CD8-positive, alpha-beta T cell (primary cell): ENCODE measurements at regions of chr4 and their contacts with region 1.

Region 1: GRCh38 chr4:168318266-168318895 is at the start of gene DDX60:
- DNase-seq: peak; percentile 65 to 96 (median 85)
- ATAC-seq: peak; percentile 94
- H3K4me3 ChIP-seq: peak within 1 kb of the TSS; percentile 95 to 100
- H3K4me3 Mint-ChIP-seq: peak within 1 kb of the TSS; percentile 98
- H3K27ac ChIP-seq: peak within 1 kb of the TSS; percentile 99
- H3K27ac Mint-ChIP-seq: peak within 1 kb of the TSS; percentile 99
- H3K4me1 ChIP-seq: peaks cover 24% of the 10 kb centered on the region
- H3K4me1 Mint-ChIP-seq: peaks cover 43% of the 10 kb centered on the region
- H3K27me3 ChIP-seq: no peaks in the 10 kb centered on the region
- H3K27me3 Mint-ChIP-seq: no peaks in the 10 kb centered on the region
- CTCF ChIP-seq: no peak
- total RNA-seq, gene DDX60: 8.2 to 10.1 TPM

Region 2: GRCh38 chr4:168269896-168270295 is 48.5 kb before region 1 on chr4:
- CTCF ChIA-PET with region 1: no interaction called
- POLR2A ChIA-PET with region 1: no interaction called
- intact Hi-C with region 1: loop called in 1 of 2 experiments (anchors 5 kb)
- DNase-seq: no peak
- ATAC-seq: no peak
- H3K4me3 ChIP-seq: no peak overlapping the region
- H3K4me3 Mint-ChIP-seq: no peak overlapping the region
- H3K27ac ChIP-seq: no peak overlapping the region
- H3K27ac Mint-ChIP-seq: no peak overlapping the region
- H3K4me1 ChIP-seq: peaks cover 7% of the 10 kb centered on the region
- H3K4me1 Mint-ChIP-seq: peaks cover 6% of the 10 kb centered on the region
- H3K27me3 ChIP-seq: no peaks in the 10 kb centered on the region
- H3K27me3 Mint-ChIP-seq: no peaks in the 10 kb centered on the region
- CTCF ChIP-seq: no peak

Region 3: DNA sequence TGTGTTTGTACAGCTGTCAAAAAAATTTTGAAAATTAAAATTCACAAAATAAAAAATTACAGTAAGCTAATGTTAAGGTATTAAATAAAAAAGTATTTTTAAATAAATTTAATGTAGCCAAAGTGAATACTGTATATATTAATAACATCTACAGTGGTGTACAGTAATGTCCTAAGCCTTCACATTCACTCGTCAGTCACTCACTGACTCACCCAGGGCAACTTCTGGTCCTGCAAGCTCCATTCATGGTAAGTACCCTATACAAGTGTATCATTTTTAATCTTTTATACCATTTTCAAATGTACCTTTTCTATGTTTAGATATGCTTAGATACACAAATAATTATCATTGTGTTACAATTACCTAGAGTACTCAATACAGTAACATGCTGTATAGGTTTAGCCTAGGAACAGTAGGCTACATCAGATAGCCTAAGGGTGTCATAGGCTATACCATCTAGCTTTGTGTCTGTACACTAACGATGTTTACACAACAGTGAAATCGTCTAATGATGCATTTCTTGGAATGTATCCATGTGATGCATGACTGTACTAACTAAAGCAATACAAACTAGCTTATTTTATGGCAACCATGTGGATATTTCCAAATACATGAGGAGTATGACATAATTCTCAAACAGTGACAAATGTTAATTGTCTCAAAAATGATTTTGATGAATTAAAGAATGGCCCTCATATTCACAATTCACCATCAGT is 13.5 kb before region 1 on chr4:
- CTCF ChIA-PET with region 1: no interaction called
- POLR2A ChIA-PET with region 1: interaction called, 12 read pairs
- intact Hi-C with region 1: no loop called
- DNase-seq: no peak
- ATAC-seq: no peak
- H3K4me3 ChIP-seq: no peak overlapping the region
- H3K4me3 Mint-ChIP-seq: no peak overlapping the region
- H3K27ac ChIP-seq: no peak overlapping the region
- H3K27ac Mint-ChIP-seq: no peak overlapping the region
- H3K4me1 ChIP-seq: peaks cover 3% of the 10 kb centered on the region
- H3K4me1 Mint-ChIP-seq: peaks cover 20% of the 10 kb centered on the region
- H3K27me3 ChIP-seq: no peaks in the 10 kb centered on the region
- H3K27me3 Mint-ChIP-seq: no peaks in the 10 kb centered on the region
- CTCF ChIP-seq: no peak

Region 4: GRCh38 chr4:168480931-168481611 is 162.7 kb after region 1 on chr4:
- CTCF ChIA-PET with region 1: interaction called, 5 read pairs
- POLR2A ChIA-PET with region 1: interaction called, 16 read pairs
- intact Hi-C with region 1: loop called (anchors 1 to 2 kb)
- DNase-seq: peak in 8 of 9 experiments; percentile 16 to 89 (median 56)
- ATAC-seq: peak; percentile 67
- H3K4me3 ChIP-seq: peak overlapping the region; percentile 56 to 93
- H3K4me3 Mint-ChIP-seq: peak overlapping the region; percentile 99
- H3K27ac ChIP-seq: peak overlapping the region; percentile 82 to 96
- H3K27ac Mint-ChIP-seq: peak overlapping the region; percentile 97
- H3K4me1 ChIP-seq: peaks cover 42% of the 10 kb centered on the region
- H3K4me1 Mint-ChIP-seq: peaks cover 66% of the 10 kb centered on the region
- H3K27me3 ChIP-seq: no peaks in the 10 kb centered on the region
- H3K27me3 Mint-ChIP-seq: no peaks in the 10 kb centered on the region
- CTCF ChIP-seq: no peak

Region 5: GRCh38 chr4:168631241-168632162 is 313.1 kb after region 1 on chr4:
- CTCF ChIA-PET with region 1: no interaction called
- POLR2A ChIA-PET with region 1: no interaction called
- intact Hi-C with region 1: no loop called
- DNase-seq: no peak
- ATAC-seq: no peak
- H3K4me3 ChIP-seq: no peak overlapping the region
- H3K4me3 Mint-ChIP-seq: peak overlapping the region; percentile 26
- H3K27ac ChIP-seq: no peak overlapping the region
- H3K27ac Mint-ChIP-seq: no peak overlapping the region
- H3K4me1 ChIP-seq: no peaks in the 10 kb centered on the region
- H3K4me1 Mint-ChIP-seq: peaks cover 12% of the 10 kb centered on the region
- H3K27me3 ChIP-seq: peaks cover 5 to 6% of the 10 kb centered on the region in 2 experiments
- H3K27me3 Mint-ChIP-seq: peaks cover 55% of the 10 kb centered on the region
- CTCF ChIP-seq: no peak

Region 6: GRCh38 chr4:169757575-169758184 is 1439.3 kb after region 1 on chr4 and contains the start of gene HPF1:
- CTCF ChIA-PET with region 1: no interaction called
- POLR2A ChIA-PET with region 1: no interaction called
- intact Hi-C with region 1: loop called (anchors 1 to 5 kb)
- DNase-seq: peak; percentile 82 to 97 (median 95)
- ATAC-seq: peak; percentile 98
- H3K4me3 ChIP-seq: peak within 1 kb of the TSS; percentile 62 to 97
- H3K4me3 Mint-ChIP-seq: peak within 1 kb of the TSS; percentile 82
- H3K27ac ChIP-seq: peak within 1 kb of the TSS; percentile 31 to 63
- H3K27ac Mint-ChIP-seq: peak within 1 kb of the TSS; percentile 64
- H3K4me1 ChIP-seq: peaks cover 14% of the 10 kb centered on the region
- H3K4me1 Mint-ChIP-seq: peaks cover 34% of the 10 kb centered on the region
- H3K27me3 ChIP-seq: no peaks in the 10 kb centered on the region
- H3K27me3 Mint-ChIP-seq: no peaks in the 10 kb centered on the region
- CTCF ChIP-seq: no peak
- total RNA-seq, gene HPF1: 3.1 to 4.2 TPM

Region 7: DNA sequence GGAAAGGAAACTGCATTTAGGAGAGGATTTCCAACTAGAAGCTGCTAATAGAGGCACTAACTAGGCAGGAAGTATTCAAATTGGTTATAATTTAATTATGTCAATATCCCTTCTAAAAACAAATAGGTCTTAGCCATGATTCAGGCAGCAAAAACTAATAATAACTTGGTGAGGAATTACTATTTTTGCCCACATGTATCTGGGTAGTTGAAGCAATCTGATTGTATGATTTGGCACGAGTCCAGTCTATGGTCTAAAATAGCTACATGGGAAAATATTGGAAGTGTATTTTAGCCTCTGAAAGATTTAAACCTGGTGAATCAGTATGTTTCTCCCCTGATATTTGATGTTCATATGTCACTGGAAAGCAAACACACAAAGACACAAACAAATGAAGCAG is 1645.6 kb after region 1 on chr4:
- CTCF ChIA-PET with region 1: no interaction called
- POLR2A ChIA-PET with region 1: no interaction called
- intact Hi-C with region 1: no loop called
- DNase-seq: no peak
- ATAC-seq: no peak
- H3K4me3 ChIP-seq: no peak overlapping the region
- H3K4me3 Mint-ChIP-seq: no peak overlapping the region
- H3K27ac ChIP-seq: no peak overlapping the region
- H3K27ac Mint-ChIP-seq: no peak overlapping the region
- H3K4me1 ChIP-seq: no peaks in the 10 kb centered on the region
- H3K4me1 Mint-ChIP-seq: no peaks in the 10 kb centered on the region
- H3K27me3 ChIP-seq: no peaks in the 10 kb centered on the region
- H3K27me3 Mint-ChIP-seq: no peaks in the 10 kb centered on the region
- CTCF ChIP-seq: no peak